Common myeloid progenitor, CD34-positive (primary cell): ENCODE measurements at regions of chr13 and their contacts with region 1.

Region 1: DNA sequence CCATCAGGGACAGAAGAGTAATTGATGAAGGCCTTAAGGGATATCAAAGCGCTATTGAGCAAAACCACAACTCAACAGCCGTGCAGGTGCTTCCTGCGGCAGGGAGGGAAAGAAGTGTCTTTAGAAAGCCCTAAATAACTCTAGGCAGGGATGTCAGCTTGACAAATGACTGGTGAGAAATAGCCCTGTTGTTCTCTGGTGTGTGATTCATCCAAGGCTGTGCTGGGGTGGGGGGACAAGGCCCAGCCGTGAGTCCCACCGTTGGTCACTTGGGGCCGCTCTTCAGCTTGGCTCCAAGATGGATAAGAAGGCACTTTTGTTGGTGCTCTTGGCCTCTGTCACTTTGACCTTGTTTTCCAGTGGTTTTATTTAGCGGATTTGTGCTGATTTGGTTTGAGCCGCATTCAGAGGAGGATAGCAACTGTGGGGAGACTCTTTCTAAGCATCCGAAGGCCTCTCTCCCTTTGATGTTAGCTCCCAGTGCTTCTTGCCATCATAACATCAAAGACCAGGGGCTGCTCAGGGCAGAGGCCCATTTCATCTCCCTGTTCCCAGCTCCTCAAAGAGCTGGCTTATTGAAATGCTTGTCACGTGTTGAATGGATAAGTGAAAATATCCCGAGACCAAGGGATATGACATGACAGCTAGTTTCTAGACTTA is 130.3 kb upstream of the SERP2 start:
- DNase-seq: peak; percentile 94 to 99 (median 98)
- H3K4me3 ChIP-seq: no peak overlapping the region
- H3K27ac ChIP-seq: peak overlapping the region in 1 of 2 experiments; percentile 40
- H3K4me1 ChIP-seq: peaks cover 4 to 59% (median 42%) of the 10 kb centered on the region in 4 experiments
- H3K27me3 ChIP-seq: no peaks in the 10 kb centered on the region

Region 2: GRCh38 chr13:44050450-44051063 is 192.8 kb before region 1 on chr13:
- CTCF ChIA-PET with region 1: interaction called, 14 read pairs
- POLR2A ChIA-PET with region 1: no interaction called
- DNase-seq: peak; percentile 52 to 66 (median 58)
- H3K4me3 ChIP-seq: no peak overlapping the region
- H3K27ac ChIP-seq: no peak overlapping the region
- H3K4me1 ChIP-seq: peaks cover 0 to 24% (median 3%) of the 10 kb centered on the region in 4 experiments
- H3K27me3 ChIP-seq: no peaks in the 10 kb centered on the region

Region 3: GRCh38 chr13:44373601-44374348 is 130.4 kb after region 1 on chr13 and contains the start of gene SERP2:
- CTCF ChIA-PET with region 1: interaction called, 11 read pairs
- POLR2A ChIA-PET with region 1: interaction called, 3 read pairs
- DNase-seq: peak in 1 of 3 donors; percentile 36
- H3K4me3 ChIP-seq: peak within 1 kb of the TSS; percentile 13 to 76 (median 43)
- H3K27ac ChIP-seq: no peak within 1 kb of the TSS
- H3K4me1 ChIP-seq: peaks cover 1 to 47% (median 22%) of the 10 kb centered on the region in 4 experiments
- H3K27me3 ChIP-seq: no peaks in the 10 kb centered on the region

Region 4: GRCh38 chr13:44410346-44410859 is 167.1 kb after region 1 on chr13:
- CTCF ChIA-PET with region 1: interaction called, 18 read pairs
- POLR2A ChIA-PET with region 1: interaction called, 3 read pairs
- DNase-seq: peak in 1 of 3 donors; percentile 51
- H3K4me3 ChIP-seq: no peak overlapping the region
- H3K27ac ChIP-seq: no peak overlapping the region
- H3K4me1 ChIP-seq: peaks cover 0 to 73% (median 50%) of the 10 kb centered on the region in 4 experiments
- H3K27me3 ChIP-seq: no peaks in the 10 kb centered on the region